ENCODE measurements at regions of chr12 and their contacts with region 1.

Region 1: DNA sequence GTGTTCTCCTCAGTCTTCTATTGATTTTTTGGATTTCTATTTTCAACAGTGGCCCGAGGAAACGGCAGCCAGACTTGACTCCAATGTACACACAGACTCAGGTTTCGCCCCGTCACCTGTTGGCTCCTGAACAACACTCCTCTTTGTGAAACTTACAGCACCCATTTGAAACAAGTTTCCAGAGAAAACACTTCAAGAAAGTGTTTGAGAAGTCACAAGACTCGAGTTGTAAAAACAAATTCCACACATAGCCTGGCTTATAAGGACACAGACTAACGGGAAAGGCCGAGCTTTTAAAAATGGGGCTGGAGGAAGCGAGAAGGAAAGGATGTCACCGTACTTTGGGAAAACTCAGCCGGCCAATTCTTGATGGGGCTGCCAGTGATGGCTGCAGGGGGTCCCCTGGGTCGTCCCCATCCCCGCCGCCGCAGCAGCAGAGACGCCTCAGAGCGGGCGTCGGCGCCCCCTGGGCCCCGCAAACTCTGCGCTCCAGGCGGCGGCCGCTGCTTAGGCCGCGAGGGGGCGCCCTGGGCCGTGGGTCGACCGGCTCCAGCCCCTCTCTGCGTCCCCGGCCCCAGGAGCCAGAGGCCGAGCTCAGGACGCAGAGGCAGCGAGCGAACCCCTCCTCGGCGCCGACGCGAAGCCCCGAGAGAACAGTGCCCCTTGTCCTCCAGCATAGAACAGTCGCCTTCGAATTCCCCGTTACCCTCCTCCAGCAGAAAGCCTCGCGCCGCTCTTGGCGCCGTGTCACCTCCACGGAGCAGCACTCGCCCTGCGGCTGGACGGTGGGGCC is 106.9 kb downstream of the PRICKLE1 start:
- DNase-seq: peak; percentile 25 to 42
- ATAC-seq: peak; percentile 79 to 85
- H3K4me3 ChIP-seq: peak overlapping the region; percentile 73 to 84 (median 77)
- H3K27ac ChIP-seq: peak overlapping the region; percentile 38 to 74 (median 56)
- H3K4me1 ChIP-seq: peaks cover 0 to 12% of the 10 kb centered on the region in 2 donors
- H3K27me3 ChIP-seq: no peaks in the 10 kb centered on the region
- CTCF ChIP-seq: peak; percentile 79 to 94 (median 81)
- POLR2A ChIP-seq: no peak

Region 2: DNA sequence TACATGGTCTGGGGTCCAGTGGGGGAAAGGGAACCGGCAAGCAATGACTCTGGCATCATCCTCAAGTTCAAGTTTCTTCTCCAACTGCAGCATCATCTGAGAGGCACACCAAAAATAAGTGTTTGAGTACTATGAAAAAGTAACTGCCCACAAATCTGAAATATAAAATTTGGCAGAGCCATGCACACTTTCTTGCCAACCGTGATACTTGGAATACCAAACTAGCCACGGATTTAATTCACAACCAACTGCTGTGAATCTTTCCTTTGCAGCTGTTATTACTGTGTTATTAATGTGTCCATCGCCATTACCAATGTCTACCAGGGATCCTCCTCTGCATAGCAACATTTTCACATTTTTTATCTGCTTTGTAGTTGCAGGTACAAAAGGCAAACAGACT is 412.6 kb before region 1 on chr12:
- in situ Hi-C with region 1: no loop called
- intact Hi-C with region 1: no loop called
- DNase-seq: no peak
- ATAC-seq: no peak
- H3K4me3 ChIP-seq: no peak overlapping the region
- H3K27ac ChIP-seq: no peak overlapping the region
- H3K4me1 ChIP-seq: no peaks in the 10 kb centered on the region
- H3K27me3 ChIP-seq: no peaks in the 10 kb centered on the region
- CTCF ChIP-seq: no peak
- POLR2A ChIP-seq: no peak

Region 3: GRCh38 chr12:42129595-42130204 is 352.9 kb before region 1 on chr12:
- in situ Hi-C with region 1: no loop called
- intact Hi-C with region 1: loop called (anchors 5 kb)
- DNase-seq: peak in 1 of 2 donors; percentile 39
- ATAC-seq: peak; percentile 91
- H3K4me3 ChIP-seq: no peak overlapping the region
- H3K27ac ChIP-seq: no peak overlapping the region
- H3K4me1 ChIP-seq: peaks cover 18 to 23% of the 10 kb centered on the region in 2 donors
- H3K27me3 ChIP-seq: no peaks in the 10 kb centered on the region
- CTCF ChIP-seq: peak; percentile 62 to 93 (median 84)
- POLR2A ChIP-seq: no peak

Region 4: DNA sequence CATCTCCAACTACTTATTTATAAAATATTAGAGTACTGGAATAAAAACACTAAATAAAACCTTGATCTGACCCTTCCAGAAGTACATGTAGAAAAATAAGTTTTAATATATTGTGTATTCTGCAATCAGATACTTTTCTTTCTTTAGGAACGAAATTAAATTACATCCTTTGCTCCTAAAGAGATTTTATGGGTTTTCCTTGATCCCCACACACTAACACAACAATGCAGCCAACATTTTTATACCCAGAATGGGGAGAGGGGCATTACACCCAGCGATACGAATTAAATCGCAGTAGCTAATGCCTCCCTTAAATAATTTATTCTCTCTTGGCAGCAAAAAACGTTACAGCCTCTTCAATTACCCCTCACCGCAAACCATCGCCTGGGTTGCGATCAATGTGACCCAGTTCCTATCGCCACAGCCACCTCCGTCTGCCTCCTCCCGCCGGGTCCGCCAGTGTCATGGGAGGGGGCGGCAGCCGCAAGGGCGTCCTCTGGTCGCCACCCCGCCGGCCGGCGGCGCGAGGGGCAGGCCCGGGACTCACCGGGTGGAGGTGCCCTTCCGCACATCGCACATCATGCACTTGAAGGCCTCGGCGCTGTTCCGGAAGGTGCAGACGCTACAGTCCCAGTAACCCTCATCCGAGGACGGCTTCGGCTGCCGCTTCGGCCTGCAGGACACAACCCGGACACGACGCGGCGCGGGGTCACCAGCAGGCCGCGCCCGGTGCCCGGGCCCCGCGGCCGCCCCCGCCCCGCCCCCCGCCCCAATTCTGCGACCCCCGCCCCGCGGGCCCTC is 245.4 kb before region 1 on chr12:
- in situ Hi-C with region 1: no loop called
- intact Hi-C with region 1: loop called (anchors 5 kb)
- DNase-seq: peak; percentile 57 to 82
- ATAC-seq: peak; percentile 66 to 79
- H3K4me3 ChIP-seq: peak overlapping the region; percentile 73 to 99 (median 81)
- H3K27ac ChIP-seq: peak overlapping the region; percentile 77 to 98 (median 89)
- H3K4me1 ChIP-seq: peaks cover 53 to 57% of the 10 kb centered on the region in 2 donors
- H3K27me3 ChIP-seq: no peaks in the 10 kb centered on the region
- CTCF ChIP-seq: peak; percentile 27 to 59 (median 32)
- POLR2A ChIP-seq: no peak

Region 5: DNA sequence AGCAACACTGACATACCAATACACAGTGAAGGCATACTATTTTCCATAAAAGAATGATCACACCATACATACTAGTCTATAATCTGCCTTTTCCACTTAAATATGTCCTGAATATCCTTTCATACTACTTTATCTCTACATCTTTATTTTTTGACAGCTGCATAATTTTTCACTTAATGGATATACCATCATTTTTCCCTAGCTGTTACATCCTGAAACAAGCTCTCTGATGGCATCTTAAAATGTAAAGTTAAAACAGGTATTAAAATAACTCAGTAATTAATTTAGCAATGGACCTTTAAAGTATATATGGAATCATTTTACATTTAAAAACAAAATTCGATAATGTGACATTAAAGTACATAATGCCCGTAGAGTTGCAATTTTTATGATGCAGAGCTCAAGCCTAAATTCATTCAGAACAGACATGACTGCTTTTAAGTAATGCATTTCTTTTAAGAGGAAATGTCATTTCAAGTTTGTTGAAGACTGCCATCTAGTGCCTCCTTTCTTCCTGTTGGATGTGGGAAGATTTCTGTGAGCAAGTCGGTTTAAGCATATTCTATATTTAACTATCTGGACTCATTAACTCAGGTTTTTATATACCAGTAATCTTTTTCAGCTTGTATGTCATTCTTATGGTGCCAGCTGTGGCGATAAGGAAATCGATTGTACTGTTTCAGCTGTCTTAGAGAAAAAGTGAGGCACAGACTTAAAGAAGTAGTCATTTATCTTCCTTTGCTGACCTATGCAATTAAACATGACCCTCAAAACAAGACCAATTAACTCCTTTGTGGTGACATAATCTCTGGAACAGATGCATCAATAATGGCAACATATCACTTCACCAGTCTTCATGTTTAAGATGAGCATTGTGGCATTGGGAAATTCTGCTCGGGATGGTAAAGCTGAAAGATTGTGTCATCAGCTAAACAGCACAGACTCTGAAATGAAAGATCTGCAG is 86.6 kb after region 1 on chr12:
- in situ Hi-C with region 1: loop called in 2 of 4 experiments (anchors 10 kb)
- intact Hi-C with region 1: loop called (anchors 1 kb)
- DNase-seq: no peak
- ATAC-seq: peak; percentile 50 to 66
- H3K4me3 ChIP-seq: no peak overlapping the region
- H3K27ac ChIP-seq: no peak overlapping the region
- H3K4me1 ChIP-seq: no peaks in the 10 kb centered on the region
- H3K27me3 ChIP-seq: no peaks in the 10 kb centered on the region
- CTCF ChIP-seq: peak in 4 of 5 experiments; percentile 32 to 69 (median 50)
- POLR2A ChIP-seq: no peak

Region 6: GRCh38 chr12:42589465-42590329 is 107.1 kb after region 1 on chr12 and contains the start of gene PRICKLE1:
- in situ Hi-C with region 1: loop called in 1 of 4 experiments (anchors 25 kb)
- intact Hi-C with region 1: no loop called
- DNase-seq: peak in 1 of 2 donors; percentile 17
- ATAC-seq: peak; percentile 73 to 82
- H3K4me3 ChIP-seq: peak within 1 kb of the TSS; percentile 66 to 93 (median 70)
- H3K27ac ChIP-seq: peak within 1 kb of the TSS; percentile 37 to 68 (median 62)
- H3K4me1 ChIP-seq: peaks cover 26 to 30% of the 10 kb centered on the region in 2 donors
- H3K27me3 ChIP-seq: no peaks in the 10 kb centered on the region
- CTCF ChIP-seq: peak in 1 of 5 experiments; percentile 15
- POLR2A ChIP-seq: peak in 1 of 2 donors; percentile 7
- total RNA-seq, gene PRICKLE1: 0.87 to 9.2 (median 3.6) TPM

Region 7: DNA sequence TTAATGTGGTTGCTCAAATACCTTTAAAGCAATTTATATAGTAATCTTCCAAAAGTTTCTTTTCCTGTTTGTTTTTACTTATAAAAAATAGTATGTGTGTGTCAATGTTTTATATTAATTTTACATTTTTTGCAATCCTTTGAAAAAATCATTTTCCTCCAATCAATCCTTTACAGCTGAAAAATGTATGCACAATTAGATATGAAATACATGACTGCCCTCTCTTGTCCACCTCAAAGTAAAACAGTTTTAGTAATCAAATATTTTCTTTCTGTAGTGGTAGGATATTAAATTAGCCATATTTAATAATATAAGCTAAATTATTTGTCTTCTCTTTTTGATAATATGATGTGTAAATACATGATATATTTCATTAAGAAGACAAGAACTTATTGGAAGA is 799.5 kb after region 1 on chr12:
- in situ Hi-C with region 1: loop called in 2 of 4 experiments (anchors 25 kb)
- intact Hi-C with region 1: loop called (anchors 2 kb)
- DNase-seq: no peak
- ATAC-seq: no peak
- H3K4me3 ChIP-seq: no peak overlapping the region
- H3K27ac ChIP-seq: no peak overlapping the region
- H3K4me1 ChIP-seq: no peaks in the 10 kb centered on the region
- H3K27me3 ChIP-seq: no peaks in the 10 kb centered on the region
- CTCF ChIP-seq: no peak
- POLR2A ChIP-seq: no peak

Region 8: GRCh38 chr12:43338848-43339526 is 856.3 kb after region 1 on chr12:
- in situ Hi-C with region 1: loop called in 1 of 4 experiments (anchors 25 kb)
- intact Hi-C with region 1: loop called (anchors 2 kb)
- DNase-seq: no peak
- ATAC-seq: peak; percentile 69 to 78
- H3K4me3 ChIP-seq: no peak overlapping the region
- H3K27ac ChIP-seq: no peak overlapping the region
- H3K4me1 ChIP-seq: peaks cover 5 to 12% of the 10 kb centered on the region in 2 donors
- H3K27me3 ChIP-seq: no peaks in the 10 kb centered on the region
- CTCF ChIP-seq: peak in 1 of 5 experiments; percentile 29
- POLR2A ChIP-seq: no peak